ENCODE measurements at regions of chr17 and their contacts with region 1.

Region 1: DNA sequence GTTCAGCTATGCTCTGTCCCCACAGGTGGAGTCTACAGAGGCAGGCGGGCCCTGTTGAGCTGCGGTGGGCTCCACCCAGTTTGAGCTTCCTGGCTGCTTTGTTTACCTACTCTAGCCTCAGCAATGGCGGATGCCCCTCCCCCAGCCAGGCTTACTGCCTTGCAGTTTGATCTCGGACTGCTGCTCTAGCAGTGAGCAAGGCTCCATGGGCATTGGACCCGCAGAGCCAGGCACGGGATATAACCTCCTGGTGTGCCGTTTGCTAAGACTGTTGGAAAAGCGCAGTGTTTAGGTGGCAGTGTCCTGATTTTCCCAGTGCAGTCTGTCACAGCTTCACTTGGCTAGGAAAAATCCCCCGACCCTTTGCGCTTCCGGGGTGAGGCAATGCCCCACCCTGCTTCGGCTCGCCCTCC is 89.1 kb downstream of the BCAS3 start:
- DNase-seq: no peak
- ATAC-seq: no peak
- H3K4me3 ChIP-seq: no peak overlapping the region
- H3K27ac ChIP-seq: no peak overlapping the region
- H3K4me1 ChIP-seq: peaks cover 9% of the 10 kb centered on the region in 2 donors
- H3K27me3 ChIP-seq: no peaks in the 10 kb centered on the region
- CTCF ChIP-seq: no peak
- POLR2A ChIP-seq: no peak

Region 2: GRCh38 chr17:60704170-60704569 is 62.6 kb before region 1 on chr17:
- in situ Hi-C with region 1: loop called in 1 of 4 experiments (anchors 10 kb)
- intact Hi-C with region 1: no loop called
- DNase-seq: no peak
- ATAC-seq: no peak
- H3K4me3 ChIP-seq: no peak overlapping the region
- H3K27ac ChIP-seq: no peak overlapping the region
- H3K4me1 ChIP-seq: no peaks in the 10 kb centered on the region
- H3K27me3 ChIP-seq: no peaks in the 10 kb centered on the region
- CTCF ChIP-seq: no peak
- POLR2A ChIP-seq: no peak